Activated naive CD4-positive, alpha-beta T cell treated with anti-CD3 and anti-CD28 coated beads for 36 hours (primary cell): ENCODE measurements at regions of chr17 and their contacts with region 1.

Region 1: DNA sequence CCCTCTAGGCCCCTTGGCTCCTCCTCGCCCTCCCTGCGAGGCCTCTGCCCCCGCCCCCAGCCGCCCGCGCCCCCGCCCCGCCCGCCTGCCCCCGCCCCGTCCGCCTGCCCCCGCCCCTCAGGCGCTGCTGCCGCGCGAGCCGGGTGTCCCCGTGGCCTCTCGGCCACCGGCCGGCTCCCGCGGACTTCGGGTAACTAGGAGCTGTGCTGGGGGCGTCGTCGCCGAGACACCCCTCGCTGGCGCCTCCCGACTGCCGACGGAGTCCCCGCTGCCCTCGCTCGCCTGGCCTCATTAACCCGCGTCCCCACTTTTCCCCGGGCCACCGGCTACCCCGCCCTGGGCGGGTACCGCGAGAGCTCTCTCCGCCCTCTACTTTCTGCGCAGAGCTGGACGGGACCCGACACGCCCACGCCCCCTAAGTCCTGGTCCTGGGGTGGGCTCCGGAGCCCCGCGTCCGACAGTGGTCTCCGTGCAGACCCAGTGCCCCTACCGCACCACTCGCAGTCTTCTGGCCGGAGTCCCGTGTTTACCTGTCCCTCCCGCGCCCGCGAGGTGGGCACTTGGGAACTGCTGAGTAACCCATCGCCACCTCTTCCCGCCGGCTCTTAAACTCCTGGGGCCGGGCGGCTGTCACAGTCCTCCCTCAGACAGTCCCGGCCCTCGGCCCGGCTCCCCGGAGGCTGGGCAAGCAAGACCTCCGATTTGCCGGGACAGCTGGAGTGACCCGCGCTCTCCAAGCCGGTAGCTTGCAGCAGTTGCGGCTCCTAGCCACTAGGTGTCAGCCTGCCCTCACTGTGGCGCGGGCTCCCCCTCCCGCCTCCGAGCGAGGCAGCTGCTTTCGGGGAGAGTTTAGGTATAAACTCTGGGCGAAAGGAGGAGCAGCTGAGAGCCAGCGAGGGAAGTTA is at the start of gene TLCD1:
- DNase-seq: peak; percentile 96
- H3K4me3 Mint-ChIP-seq: peak within 1 kb of the TSS; percentile 91
- H3K27ac Mint-ChIP-seq: peak within 1 kb of the TSS; percentile 99
- H3K4me1 Mint-ChIP-seq: peaks cover 42% of the 10 kb centered on the region
- H3K27me3 Mint-ChIP-seq: no peaks in the 10 kb centered on the region
- total RNA-seq, gene TLCD1: 4.0 to 4.6 TPM

Region 2: DNA sequence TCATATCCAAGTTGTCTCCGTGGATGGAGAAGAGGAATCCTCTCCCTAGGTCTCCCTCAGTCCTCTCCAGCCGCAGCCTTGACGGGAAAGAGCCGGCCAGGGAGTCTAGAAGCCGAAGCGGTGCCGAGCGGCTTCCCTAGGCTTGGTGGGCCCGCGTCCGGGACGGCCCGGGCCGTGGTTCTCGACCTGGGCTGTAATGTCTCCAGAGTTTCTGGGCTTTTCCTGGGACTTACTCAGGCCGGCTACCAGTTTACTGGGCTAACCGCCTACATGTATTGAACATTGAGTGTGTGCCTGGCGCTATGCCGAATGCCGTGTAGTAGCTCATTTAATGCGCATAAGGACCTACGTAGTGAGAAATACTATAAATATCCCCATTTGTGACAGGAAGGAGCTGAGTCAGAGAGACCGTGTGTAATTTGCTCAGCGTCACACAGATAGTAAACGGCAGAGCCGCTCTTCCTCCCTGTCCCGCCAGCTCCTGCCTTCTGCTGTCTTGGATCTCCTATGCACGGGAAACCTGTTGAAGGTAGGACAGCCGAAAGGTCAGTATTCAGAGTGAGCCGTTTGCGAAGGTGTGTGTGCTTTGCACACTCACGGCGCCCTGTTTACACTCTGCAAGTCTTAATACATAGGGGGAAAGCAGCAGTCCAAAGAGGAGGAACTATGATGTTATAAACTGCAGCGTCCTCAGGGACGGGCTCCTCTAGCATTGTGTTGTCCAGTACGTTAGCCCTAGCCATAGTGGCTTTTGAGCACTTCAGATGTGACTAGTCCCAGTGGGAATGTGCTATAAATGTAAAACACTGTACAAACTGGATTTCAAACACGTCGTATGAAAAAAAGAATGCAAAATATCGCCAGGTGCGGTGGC is 126.9 kb before region 1 on chr17:
- CTCF ChIA-PET with region 1: no interaction called
- intact Hi-C with region 1: no loop called
- DNase-seq: peak; percentile 90
- H3K4me3 Mint-ChIP-seq: peak overlapping the region; percentile 95
- H3K27ac Mint-ChIP-seq: peak overlapping the region; percentile 94
- H3K4me1 Mint-ChIP-seq: peaks cover 15% of the 10 kb centered on the region
- H3K27me3 Mint-ChIP-seq: no peaks in the 10 kb centered on the region

Region 3: GRCh38 chr17:28743225-28744103 is 17.0 kb after region 1 on chr17 and contains the start of gene TRAF4:
- CTCF ChIA-PET with region 1: interaction called, 353 read pairs
- intact Hi-C with region 1: loop called (anchors 1 kb)
- DNase-seq: peak; percentile 74
- H3K4me3 Mint-ChIP-seq: peak within 1 kb of the TSS; percentile 91
- H3K27ac Mint-ChIP-seq: peak within 1 kb of the TSS; percentile 85
- H3K4me1 Mint-ChIP-seq: peaks cover 45% of the 10 kb centered on the region
- H3K27me3 Mint-ChIP-seq: no peaks in the 10 kb centered on the region
- total RNA-seq, gene TRAF4: 75.9 to 80.4 TPM

Region 4: GRCh38 chr17:28812091-28812747 is 85.7 kb after region 1 on chr17:
- CTCF ChIA-PET with region 1: interaction called, 7 read pairs
- intact Hi-C with region 1: loop called (anchors 1 kb)
- DNase-seq: peak; percentile 98
- H3K4me3 Mint-ChIP-seq: peak overlapping the region; percentile 82
- H3K27ac Mint-ChIP-seq: peak overlapping the region; percentile 86
- H3K4me1 Mint-ChIP-seq: peaks cover 50% of the 10 kb centered on the region
- H3K27me3 Mint-ChIP-seq: no peaks in the 10 kb centered on the region

Region 5: DNA sequence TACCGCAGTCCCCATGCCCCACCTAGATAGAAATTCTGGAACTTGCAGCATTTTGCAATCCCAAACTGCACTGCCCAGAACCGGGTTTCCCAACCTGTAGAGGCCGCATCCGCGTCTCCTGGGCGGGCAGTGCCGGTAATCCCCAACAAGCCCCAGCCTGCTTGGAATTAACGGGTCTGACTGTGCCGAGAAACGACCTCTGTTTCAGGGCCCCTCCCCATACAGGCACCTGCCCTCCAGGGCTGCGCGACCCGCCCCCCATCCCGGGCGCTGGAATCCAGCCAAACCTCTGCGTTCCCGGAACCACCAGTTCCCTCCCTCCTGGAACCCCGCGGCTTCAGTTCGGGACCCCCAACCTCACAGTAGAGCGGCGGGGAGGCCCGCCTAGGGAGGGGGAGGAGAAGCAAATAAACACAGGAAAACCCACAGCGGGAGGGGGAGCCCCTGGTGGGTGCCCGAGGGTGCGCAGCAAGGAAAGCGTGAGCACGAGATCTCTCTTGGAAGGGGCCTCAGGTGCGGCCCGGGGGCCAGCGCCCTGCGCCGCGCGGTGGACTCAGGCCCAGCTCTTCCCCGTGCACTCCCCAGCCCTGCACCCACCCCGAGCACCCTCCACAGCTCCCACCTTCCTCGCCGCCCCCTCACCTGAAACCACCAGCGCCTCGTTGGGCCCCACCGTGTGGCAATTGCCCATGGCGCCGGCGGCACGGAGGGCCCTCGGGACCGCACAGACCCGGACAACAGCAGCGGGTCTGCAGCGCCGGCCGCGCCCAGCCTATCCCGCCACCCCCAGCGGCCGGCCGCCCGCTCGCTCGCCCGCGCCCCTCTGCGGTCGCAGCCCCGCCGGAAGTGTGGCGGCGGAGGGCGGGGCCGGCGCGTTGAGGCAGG is 170.6 kb after region 1 on chr17 and contains the start of gene FLOT2:
- CTCF ChIA-PET with region 1: interaction called, 34 read pairs
- intact Hi-C with region 1: loop called (anchors 1 kb)
- DNase-seq: peak; percentile 88
- H3K4me3 Mint-ChIP-seq: peak within 1 kb of the TSS; percentile 94
- H3K27ac Mint-ChIP-seq: peak within 1 kb of the TSS; percentile 93
- H3K4me1 Mint-ChIP-seq: peaks cover 72% of the 10 kb centered on the region
- H3K27me3 Mint-ChIP-seq: no peaks in the 10 kb centered on the region
- total RNA-seq, gene FLOT2: 66.0 to 71.5 TPM

Region 6: DNA sequence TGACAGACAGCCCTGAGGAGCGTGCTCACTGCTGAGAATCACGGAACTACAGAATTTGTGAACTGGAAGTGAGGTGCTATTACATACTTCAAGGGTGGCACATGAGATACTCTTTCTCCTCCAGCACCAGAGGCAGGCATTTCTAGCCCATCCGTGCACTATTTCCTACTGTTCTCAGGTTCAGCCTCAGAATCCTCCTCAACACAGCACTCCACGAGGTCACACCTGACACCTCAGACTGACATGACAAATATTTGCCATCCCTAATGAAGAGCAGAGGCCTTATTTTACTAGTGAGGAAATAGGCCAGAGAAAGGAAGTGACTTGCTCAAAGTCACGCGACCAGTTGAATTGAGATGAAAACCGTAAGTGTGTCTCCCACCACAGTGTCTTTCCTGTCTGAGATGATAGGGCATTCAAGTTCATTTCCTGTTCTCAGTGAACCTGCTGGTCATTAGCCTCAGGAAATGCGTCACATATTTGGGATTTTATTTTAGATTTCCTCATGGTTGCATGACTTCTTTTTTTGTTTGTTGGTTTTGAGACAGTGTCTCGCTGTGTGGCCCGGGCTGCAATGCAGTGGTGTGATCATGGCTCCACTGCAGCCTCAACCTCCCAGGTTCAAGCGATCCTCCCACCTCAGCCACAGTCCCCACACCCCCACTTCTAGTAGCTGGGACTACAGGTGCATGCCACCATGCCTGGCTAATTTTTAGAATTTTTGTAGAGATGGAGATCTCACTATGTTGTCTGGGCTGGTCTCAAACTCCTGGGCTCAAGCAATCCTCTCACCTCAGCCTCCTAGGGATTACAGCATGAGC is 255.9 kb after region 1 on chr17:
- CTCF ChIA-PET with region 1: interaction called, 3 read pairs
- intact Hi-C with region 1: loop called (anchors 1 kb)
- DNase-seq: peak; percentile 82
- H3K4me3 Mint-ChIP-seq: no peak overlapping the region
- H3K27ac Mint-ChIP-seq: peak overlapping the region; percentile 96
- H3K4me1 Mint-ChIP-seq: peaks cover 22% of the 10 kb centered on the region
- H3K27me3 Mint-ChIP-seq: no peaks in the 10 kb centered on the region

Region 7: GRCh38 chr17:29568331-29569244 is 842.1 kb after region 1 on chr17 and contains the start of gene TP53I13:
- CTCF ChIA-PET with region 1: no interaction called
- intact Hi-C with region 1: loop called (anchors 10 kb)
- DNase-seq: peak; percentile 91
- H3K4me3 Mint-ChIP-seq: peak within 1 kb of the TSS; percentile 94
- H3K27ac Mint-ChIP-seq: peak within 1 kb of the TSS; percentile 88
- H3K4me1 Mint-ChIP-seq: peaks cover 12% of the 10 kb centered on the region
- H3K27me3 Mint-ChIP-seq: no peaks in the 10 kb centered on the region
- total RNA-seq, gene TP53I13: 30.9 to 37.2 TPM